Sigmoid colon (tissue), 7 donors: ENCODE measurements at regions of chr17 and their contacts with region 1.

Region 1: DNA sequence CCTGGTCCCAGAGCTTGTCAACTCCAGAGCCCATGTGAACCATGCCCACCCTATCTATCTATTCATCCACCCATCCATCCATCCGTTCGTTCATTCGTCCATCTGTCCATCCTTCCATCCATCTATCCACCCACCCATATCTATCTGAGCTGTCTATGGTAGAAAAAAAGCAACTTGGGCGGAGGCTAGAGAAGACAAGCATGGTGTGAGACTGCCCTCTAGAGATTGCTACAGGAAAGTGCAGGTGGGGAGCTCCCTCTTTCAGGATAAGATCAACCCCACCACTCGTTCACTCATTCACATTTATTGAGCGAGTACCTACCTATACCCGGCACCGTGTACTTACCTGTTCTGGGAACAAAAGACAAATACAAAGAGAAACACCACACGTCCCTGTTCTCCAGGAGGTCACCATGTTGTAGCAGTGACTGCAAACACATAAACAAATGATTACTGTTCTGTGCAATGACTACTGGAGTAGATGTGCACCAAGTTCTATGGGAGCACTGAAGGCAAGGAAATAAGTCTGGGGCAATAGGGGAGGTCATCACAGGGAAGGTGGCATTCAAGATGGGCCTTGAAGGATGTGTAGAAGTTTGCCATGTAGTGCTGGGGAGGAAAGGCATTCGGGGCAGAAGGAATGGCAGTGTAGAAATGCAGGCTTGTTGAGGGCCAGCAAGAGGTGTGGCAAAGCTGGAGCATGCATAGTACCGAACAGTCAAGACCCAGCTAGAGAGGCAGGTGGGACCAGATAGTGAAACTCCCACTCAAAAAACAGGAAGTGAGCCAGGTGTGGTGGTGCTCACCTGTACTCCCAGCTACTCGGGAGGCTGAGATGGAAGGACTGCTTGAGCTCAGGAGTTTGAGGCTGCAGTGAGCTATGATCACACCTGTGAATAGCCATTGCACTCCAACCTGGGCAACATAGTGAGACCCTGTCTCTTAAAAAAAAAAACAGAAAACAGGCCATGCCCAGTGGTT is 13.4 kb upstream of the ATP5MC1 start:
- DNase-seq: no peak
- H3K4me3 ChIP-seq: no peak overlapping the region
- H3K27ac ChIP-seq: no peak overlapping the region
- H3K4me1 ChIP-seq: no peaks in the 10 kb centered on the region
- H3K27me3 ChIP-seq: no peaks in the 10 kb centered on the region
- CTCF ChIP-seq: peak; percentile 74 to 98 (median 92)
- EP300 ChIP-seq: no peak
- POLR2A ChIP-seq: no peak

Region 2: DNA sequence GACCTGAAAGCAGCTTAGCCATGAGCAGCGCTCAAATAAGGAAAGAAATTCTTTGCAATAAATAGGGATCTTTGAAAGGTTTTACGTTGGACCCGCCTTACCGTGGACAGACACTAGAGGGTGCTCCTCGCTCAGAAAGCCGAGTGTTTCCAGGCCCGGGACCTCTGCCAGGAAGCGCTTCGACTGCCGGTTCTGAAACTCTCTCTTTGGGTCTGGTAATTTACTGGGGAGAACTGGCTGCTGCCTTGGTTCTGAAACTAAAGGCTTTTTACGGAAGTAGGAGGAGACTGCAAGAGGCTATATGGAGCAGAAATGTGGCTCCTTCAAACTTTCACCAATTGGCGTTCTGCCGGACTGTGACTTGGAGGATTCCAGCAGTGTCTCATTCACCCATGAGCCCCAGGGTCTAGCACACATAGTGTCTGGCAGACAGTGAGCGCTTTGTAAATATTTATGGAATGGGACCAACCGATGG is 207.5 kb before region 1 on chr17:
- intact Hi-C with region 1: loop called (anchors 2 kb)
- DNase-seq: peak; percentile 91
- H3K4me3 ChIP-seq: peak overlapping the region in 3 of 4 donors; percentile 27 to 36 (median 32)
- H3K27ac ChIP-seq: peak overlapping the region in 3 of 4 donors; percentile 30 to 40 (median 33)
- H3K4me1 ChIP-seq: peaks cover 0 to 10% (median 8%) of the 10 kb centered on the region in 4 donors
- H3K27me3 ChIP-seq: peaks cover 0 to 15% (median 1%) of the 10 kb centered on the region in 3 donors
- CTCF ChIP-seq: peak; percentile 38 to 89 (median 79)
- EP300 ChIP-seq: no peak
- POLR2A ChIP-seq: no peak

Region 3: GRCh38 chr17:48678141-48678971 is 200.9 kb before region 1 on chr17:
- intact Hi-C with region 1: loop called (anchors 2 kb)
- DNase-seq: peak; percentile 70
- H3K4me3 ChIP-seq: no peak overlapping the region
- H3K27ac ChIP-seq: no peak overlapping the region
- H3K4me1 ChIP-seq: peaks cover 0 to 7% (median 6%) of the 10 kb centered on the region in 4 donors
- H3K27me3 ChIP-seq: peaks cover 3 to 33% (median 8%) of the 10 kb centered on the region in 3 donors
- CTCF ChIP-seq: peak; percentile 47 to 92 (median 74)
- EP300 ChIP-seq: no peak
- POLR2A ChIP-seq: no peak

Region 4: DNA sequence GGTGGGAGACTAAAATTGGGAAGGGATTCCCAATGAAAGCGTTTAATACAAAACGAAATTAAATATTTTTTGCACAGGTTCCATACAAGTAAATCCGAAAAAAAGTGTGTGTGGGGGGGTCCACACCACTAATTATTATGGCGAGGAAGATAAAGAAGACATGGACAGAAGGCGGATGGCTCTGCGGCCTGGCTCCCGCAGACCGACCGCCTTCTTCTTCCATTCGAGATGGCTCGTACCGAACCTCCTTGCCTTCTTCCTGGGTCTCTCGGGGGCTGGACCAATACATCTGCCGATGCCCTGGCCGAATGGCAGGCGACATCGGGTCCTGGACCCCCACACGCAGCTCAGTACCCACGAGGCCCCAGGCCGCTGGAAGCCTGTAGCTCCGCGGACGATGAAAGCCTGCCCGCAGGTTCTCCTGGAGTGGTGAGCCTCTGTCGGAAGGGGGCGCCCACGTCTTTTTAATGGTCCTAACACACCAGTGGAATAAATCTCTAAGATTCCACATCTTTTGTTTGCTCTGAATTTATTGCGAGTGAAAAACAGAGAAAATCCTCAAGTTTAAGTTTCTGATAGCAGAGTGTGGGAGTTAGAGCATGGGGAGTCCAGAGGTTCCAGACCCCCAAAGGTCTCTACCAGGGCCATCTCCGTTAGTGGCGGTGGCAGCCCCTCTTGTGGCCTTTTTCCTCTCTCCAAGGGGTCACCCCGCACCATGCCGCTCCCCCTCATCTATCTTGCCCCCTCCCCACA is 154.8 kb before region 1 on chr17:
- intact Hi-C with region 1: loop called (anchors 2 kb)
- DNase-seq: peak; percentile 91
- H3K4me3 ChIP-seq: peak overlapping the region in 1 of 4 donors; percentile 11
- H3K27ac ChIP-seq: no peak overlapping the region
- H3K4me1 ChIP-seq: peaks cover 0 to 51% (median 45%) of the 10 kb centered on the region in 4 donors
- H3K27me3 ChIP-seq: peaks cover 74 to 100% (median 100%) of the 10 kb centered on the region in 3 donors
- CTCF ChIP-seq: peak; percentile 31 to 79 (median 69)
- EP300 ChIP-seq: no peak
- POLR2A ChIP-seq: no peak

Region 5: GRCh38 chr17:48804925-48805411 is 74.2 kb before region 1 on chr17:
- intact Hi-C with region 1: loop called (anchors 2 kb)
- DNase-seq: peak; percentile 74
- H3K4me3 ChIP-seq: no peak overlapping the region
- H3K27ac ChIP-seq: no peak overlapping the region
- H3K4me1 ChIP-seq: peaks cover 0 to 33% (median 13%) of the 10 kb centered on the region in 4 donors
- H3K27me3 ChIP-seq: no peaks in the 10 kb centered on the region
- CTCF ChIP-seq: peak; percentile 85 to 94 (median 90)
- EP300 ChIP-seq: no peak
- POLR2A ChIP-seq: no peak

Region 6: DNA sequence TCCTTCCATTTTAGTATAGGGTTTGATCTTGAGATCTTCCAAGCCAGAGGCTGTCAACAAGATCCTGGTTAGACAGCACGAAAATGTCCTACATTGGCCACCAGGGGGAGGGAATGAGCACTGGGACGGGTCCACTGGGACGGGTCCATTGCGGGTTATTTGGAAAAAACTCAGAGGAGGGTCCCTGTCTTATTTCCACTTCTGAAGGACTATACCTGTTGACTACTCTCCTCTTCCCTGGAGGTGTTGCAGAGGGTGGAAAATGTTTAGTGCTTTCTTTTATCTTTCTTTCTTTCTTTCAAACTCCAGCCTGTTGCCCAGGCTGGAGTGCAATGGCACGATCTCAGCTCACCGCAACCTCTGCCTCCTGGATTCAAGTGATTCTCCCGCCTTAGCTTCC is 64.7 kb before region 1 on chr17:
- intact Hi-C with region 1: loop called (anchors 2 kb)
- DNase-seq: no peak
- H3K4me3 ChIP-seq: no peak overlapping the region
- H3K27ac ChIP-seq: no peak overlapping the region
- H3K4me1 ChIP-seq: peaks cover 0 to 17% (median 13%) of the 10 kb centered on the region in 4 donors
- H3K27me3 ChIP-seq: peaks cover 7 to 40% (median 27%) of the 10 kb centered on the region in 3 donors
- CTCF ChIP-seq: peak; percentile 36 to 63 (median 62)
- EP300 ChIP-seq: no peak
- POLR2A ChIP-seq: no peak

Region 7: GRCh38 chr17:49327835-49328784 is 448.9 kb after region 1 on chr17:
- intact Hi-C with region 1: no loop called
- DNase-seq: no peak
- H3K4me3 ChIP-seq: no peak overlapping the region
- H3K27ac ChIP-seq: no peak overlapping the region
- H3K4me1 ChIP-seq: peaks cover 0 to 43% (median 6%) of the 10 kb centered on the region in 4 donors
- H3K27me3 ChIP-seq: no peaks in the 10 kb centered on the region
- CTCF ChIP-seq: no peak
- EP300 ChIP-seq: no peak
- POLR2A ChIP-seq: no peak